Left lung (tissue), 14 donors: ENCODE measurements at regions of chr14 and their contacts with region 1.

Region 1: GRCh38 chr14:58166005-58166983 is 14.3 kb upstream of the ARMH4 start:
- DNase-seq: peak; percentile 62 to 92 (median 78)
- ATAC-seq: peak; percentile 87
- H3K4me3 ChIP-seq: no peak overlapping the region
- H3K27ac ChIP-seq: no peak overlapping the region
- H3K4me1 ChIP-seq: no peaks in the 10 kb centered on the region
- H3K27me3 ChIP-seq: no peaks in the 10 kb centered on the region
- CTCF ChIP-seq: peak; percentile 83 to 91

Region 2: DNA sequence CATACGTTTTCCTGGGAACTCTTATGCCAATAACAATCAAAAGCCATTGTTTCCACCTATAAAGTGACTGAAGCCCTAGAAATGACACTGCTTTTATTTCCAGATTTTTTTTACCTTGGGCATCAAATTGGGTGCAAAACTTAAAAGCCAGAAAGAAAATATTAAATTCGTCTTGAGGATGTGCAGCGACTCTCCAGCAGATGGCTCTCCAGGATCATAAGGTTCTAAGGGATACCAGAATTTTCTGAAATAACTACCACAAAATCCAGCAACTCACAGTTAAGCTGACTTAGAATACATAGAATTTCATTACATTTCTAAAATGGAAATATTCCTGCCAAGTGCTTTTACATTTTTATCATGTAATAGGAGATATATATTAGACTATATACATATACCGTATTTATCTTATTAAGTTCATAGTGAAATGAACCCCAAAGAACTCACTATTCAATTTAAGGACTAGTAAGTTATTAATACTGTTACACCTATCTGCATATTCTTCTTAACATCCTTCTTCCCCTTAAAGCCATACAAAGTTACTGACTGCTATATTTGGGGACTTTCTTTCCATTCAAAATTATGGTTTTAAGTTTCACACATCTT is 58.2 kb before region 1 on chr14:
- intact Hi-C with region 1: loop called in 1 of 2 experiments (anchors 10 kb)
- DNase-seq: peak in 2 of 4 donors; percentile 43 to 77
- ATAC-seq: peak; percentile 81
- H3K4me3 ChIP-seq: no peak overlapping the region
- H3K27ac ChIP-seq: no peak overlapping the region
- H3K4me1 ChIP-seq: no peaks in the 10 kb centered on the region
- H3K27me3 ChIP-seq: no peaks in the 10 kb centered on the region
- CTCF ChIP-seq: peak in 1 of 2 donors; percentile 61